ENCODE measurements at regions of chr3 and their contacts with region 1.

Region 1: DNA sequence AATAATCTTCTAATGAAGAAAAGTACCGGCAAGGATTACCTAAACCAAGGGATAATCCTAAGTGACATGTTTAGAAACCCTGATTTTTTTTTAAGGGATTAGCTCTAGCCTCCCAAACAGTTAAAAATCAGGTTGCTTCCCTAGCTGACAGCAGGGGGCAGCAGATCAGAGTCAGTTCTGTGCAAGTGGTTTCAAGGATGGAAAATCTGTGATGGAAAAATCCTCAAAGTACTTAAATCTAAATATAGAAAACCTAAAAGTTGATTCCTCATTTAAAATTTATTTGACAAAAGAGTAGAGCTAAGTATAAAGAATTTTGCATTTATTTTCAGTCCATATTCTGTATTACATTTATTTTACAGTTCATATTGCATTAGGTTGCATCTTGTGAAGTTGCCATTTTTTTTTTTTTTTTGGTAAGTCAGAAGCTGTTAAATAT is 107.6 kb downstream of the PEX5L start:
- DNase-seq: peak; percentile 35
- ATAC-seq: peak; percentile 75
- H3K4me3 ChIP-seq: no peak overlapping the region
- H3K27ac ChIP-seq: no peak overlapping the region
- H3K4me1 ChIP-seq: no peaks in the 10 kb centered on the region
- H3K27me3 ChIP-seq: no peaks in the 10 kb centered on the region
- CTCF ChIP-seq: peak; percentile 60
- EP300 ChIP-seq: no peak
- POLR2A ChIP-seq: no peak
- RAD21 ChIP-seq: no peak

Region 2: GRCh38 chr3:180026997-180027396 is 97.9 kb after region 1 on chr3:
- CTCF ChIA-PET with region 1: no interaction called
- POLR2A ChIA-PET with region 1: no interaction called
- in situ Hi-C with region 1: no loop called
- intact Hi-C with region 1: no loop called
- DNase-seq: no peak
- ATAC-seq: no peak
- H3K4me3 ChIP-seq: no peak overlapping the region
- H3K27ac ChIP-seq: no peak overlapping the region
- H3K4me1 ChIP-seq: no peaks in the 10 kb centered on the region
- H3K27me3 ChIP-seq: no peaks in the 10 kb centered on the region
- CTCF ChIP-seq: no peak
- EP300 ChIP-seq: no peak
- POLR2A ChIP-seq: no peak
- RAD21 ChIP-seq: no peak

Region 3: DNA sequence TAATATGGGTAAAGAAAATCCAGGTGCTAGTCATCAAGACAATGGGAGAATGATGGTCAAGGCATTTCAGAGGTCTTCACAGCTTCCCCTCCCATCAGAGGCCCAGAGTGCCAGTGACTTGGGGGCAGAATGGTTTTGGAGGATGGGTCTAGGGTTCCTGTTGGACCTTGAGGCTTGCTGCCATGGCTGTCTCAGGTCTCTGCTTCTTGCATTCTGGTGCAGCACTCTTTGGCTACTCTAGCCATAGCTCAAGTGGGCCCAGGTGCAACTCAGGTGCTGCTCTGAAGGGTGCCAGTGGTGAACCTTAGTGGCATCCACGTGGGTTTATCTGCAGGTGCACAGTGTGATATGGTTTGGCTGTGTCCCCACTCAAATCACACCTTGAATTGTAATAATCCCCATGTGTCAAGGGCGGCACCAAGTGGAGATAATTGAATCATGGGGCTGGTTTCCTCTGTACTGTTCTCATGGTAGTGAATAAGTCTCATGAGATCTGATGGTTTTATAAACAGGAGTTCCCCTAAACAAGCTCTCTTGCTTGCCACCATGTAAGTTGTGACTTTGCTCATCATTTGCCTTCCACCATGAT is 156.1 kb after region 1 on chr3:
- CTCF ChIA-PET with region 1: no interaction called
- POLR2A ChIA-PET with region 1: no interaction called
- in situ Hi-C with region 1: no loop called
- intact Hi-C with region 1: loop called (anchors 10 kb)
- DNase-seq: no peak
- ATAC-seq: no peak
- H3K4me3 ChIP-seq: no peak overlapping the region
- H3K27ac ChIP-seq: no peak overlapping the region
- H3K4me1 ChIP-seq: no peaks in the 10 kb centered on the region
- H3K27me3 ChIP-seq: no peaks in the 10 kb centered on the region
- CTCF ChIP-seq: no peak
- EP300 ChIP-seq: no peak
- POLR2A ChIP-seq: no peak
- RAD21 ChIP-seq: no peak

Region 4: GRCh38 chr3:180594631-180595558 is 665.8 kb after region 1 on chr3:
- CTCF ChIA-PET with region 1: interaction called, 7 read pairs
- POLR2A ChIA-PET with region 1: no interaction called
- in situ Hi-C with region 1: loop called (anchors 10 kb)
- intact Hi-C with region 1: no loop called
- DNase-seq: peak; percentile 13
- ATAC-seq: 0 out of 3 replicates have a peak, but pooled peaks have one; percentile 29
- H3K4me3 ChIP-seq: no peak overlapping the region
- H3K27ac ChIP-seq: no peak overlapping the region
- H3K4me1 ChIP-seq: no peaks in the 10 kb centered on the region
- H3K27me3 ChIP-seq: no peaks in the 10 kb centered on the region; a peak in 1 of 5 replicates
- CTCF ChIP-seq: peak; percentile 59
- EP300 ChIP-seq: no peak
- POLR2A ChIP-seq: no peak
- RAD21 ChIP-seq: no peak